ENCODE measurements at regions of chr2 and their contacts with region 1.

Region 1: GRCh38 chr2:16664052-16664731 is 1.4 kb downstream of the CYRIA start:
- DNase-seq: peak; percentile 45 to 65
- ATAC-seq: peak; percentile 48 to 66 (median 55)
- H3K4me3 ChIP-seq: peak overlapping the region; percentile 88
- H3K4me3 Mint-ChIP-seq: peak overlapping the region; percentile 89
- H3K27ac ChIP-seq: peak overlapping the region; percentile 87
- H3K27ac Mint-ChIP-seq: peak overlapping the region; percentile 93 to 97
- H3K4me1 ChIP-seq: peaks cover 62% of the 10 kb centered on the region
- H3K4me1 Mint-ChIP-seq: peaks cover 68 to 76% of the 10 kb centered on the region in 2 donors
- H3K27me3 ChIP-seq: no peaks in the 10 kb centered on the region
- H3K27me3 Mint-ChIP-seq: no peaks in the 10 kb centered on the region
- CTCF ChIP-seq: no peak

Region 2: GRCh38 chr2:16625201-16625729 is 38.9 kb before region 1 on chr2:
- intact Hi-C with region 1: loop called (anchors 5 kb)
- DNase-seq: peak in 1 of 2 donors; percentile 16
- ATAC-seq: peak; percentile 24 to 61 (median 25)
- H3K4me3 ChIP-seq: no peak overlapping the region
- H3K4me3 Mint-ChIP-seq: peak overlapping the region; percentile 77
- H3K27ac ChIP-seq: peak overlapping the region; percentile 61
- H3K27ac Mint-ChIP-seq: peak overlapping the region; percentile 78 to 80
- H3K4me1 ChIP-seq: peaks cover 76% of the 10 kb centered on the region
- H3K4me1 Mint-ChIP-seq: peaks cover 96% of the 10 kb centered on the region in 2 donors
- H3K27me3 ChIP-seq: no peaks in the 10 kb centered on the region
- H3K27me3 Mint-ChIP-seq: no peaks in the 10 kb centered on the region
- CTCF ChIP-seq: no peak

Region 3: GRCh38 chr2:16650287-16651249 is 13.6 kb before region 1 on chr2:
- intact Hi-C with region 1: loop called (anchors 1 kb)
- DNase-seq: peak in 1 of 2 donors; percentile 35
- ATAC-seq: peak; percentile 61 to 74 (median 66)
- H3K4me3 ChIP-seq: peak overlapping the region; percentile 6
- H3K4me3 Mint-ChIP-seq: peak overlapping the region; percentile 81
- H3K27ac ChIP-seq: peak overlapping the region; percentile 77
- H3K27ac Mint-ChIP-seq: peak overlapping the region; percentile 73 to 93
- H3K4me1 ChIP-seq: peaks cover 72% of the 10 kb centered on the region
- H3K4me1 Mint-ChIP-seq: peaks cover 93 to 98% of the 10 kb centered on the region in 2 donors
- H3K27me3 ChIP-seq: no peaks in the 10 kb centered on the region
- H3K27me3 Mint-ChIP-seq: no peaks in the 10 kb centered on the region
- CTCF ChIP-seq: no peak